ENCODE measurements at regions of chr9 and their contacts with region 1.

Region 1: DNA sequence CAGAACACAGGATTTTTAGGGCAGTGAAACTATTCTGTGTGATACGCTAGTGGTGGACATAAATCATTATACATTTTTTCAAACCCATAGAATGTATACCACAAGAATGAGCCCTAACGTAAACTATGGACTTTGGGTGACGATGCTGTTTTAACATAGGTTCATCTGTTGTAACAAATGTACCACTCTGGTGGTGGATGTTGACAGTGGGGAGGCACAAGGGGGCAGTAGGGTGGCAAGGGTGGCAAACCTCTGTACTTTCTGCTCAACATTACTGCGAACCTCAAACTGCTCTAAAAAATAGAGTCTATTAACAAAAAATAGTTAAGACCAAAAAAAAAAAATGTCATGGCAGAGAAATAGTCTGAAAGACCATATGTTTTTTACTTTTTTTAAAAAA is 9.1 kb upstream of the MVB12B start:
- DNase-seq: no peak
- H3K4me3 ChIP-seq: no peak overlapping the region
- H3K27ac ChIP-seq: no peak overlapping the region
- H3K4me1 ChIP-seq: no peaks in the 10 kb centered on the region
- H3K27me3 ChIP-seq: no peaks in the 10 kb centered on the region
- CTCF ChIP-seq: peak; percentile 17 to 46

Region 2: GRCh38 chr9:126386088-126386487 is 68.6 kb after region 1 on chr9:
- CTCF ChIA-PET with region 1: no interaction called
- dilution Hi-C with region 1: no loop called
- in situ Hi-C with region 1: no loop called
- intact Hi-C with region 1: loop called (anchors 2 kb)
- DNase-seq: no peak
- H3K4me3 ChIP-seq: no peak overlapping the region
- H3K27ac ChIP-seq: no peak overlapping the region
- H3K4me1 ChIP-seq: no peaks in the 10 kb centered on the region
- H3K27me3 ChIP-seq: no peaks in the 10 kb centered on the region
- CTCF ChIP-seq: peak; percentile 42 to 58

Region 3: DNA sequence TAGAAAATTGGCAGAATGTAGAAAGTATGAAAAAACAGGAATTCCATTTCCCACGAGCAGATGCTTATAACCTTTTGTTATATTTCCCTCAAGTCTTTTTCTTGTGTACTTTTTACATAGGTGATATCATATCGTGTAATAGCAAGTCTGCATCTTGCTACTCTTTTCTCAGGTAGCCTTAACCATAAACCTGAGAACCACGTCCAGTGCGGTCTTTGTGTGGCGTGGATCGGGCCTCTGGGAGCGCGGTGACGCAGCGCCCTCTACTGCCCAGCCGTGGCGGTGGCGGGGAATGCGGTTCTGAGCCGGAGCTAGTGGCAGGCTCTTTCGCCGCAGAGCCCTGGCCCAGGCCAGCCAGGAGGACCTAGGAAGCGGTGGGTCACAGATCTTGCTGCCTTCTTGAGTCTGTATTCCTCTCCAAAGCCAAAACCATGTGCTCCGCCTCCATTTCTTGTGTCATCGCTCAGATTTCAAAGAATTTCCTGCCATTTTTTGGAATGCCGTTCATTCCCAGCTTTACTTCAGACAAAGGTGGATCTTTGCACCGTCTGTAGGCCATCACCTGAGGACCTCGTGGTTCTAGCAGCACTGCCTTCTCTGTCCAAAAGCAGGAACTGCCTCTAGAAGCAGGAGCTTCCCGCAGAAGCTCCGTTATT is 81.0 kb after region 1 on chr9:
- CTCF ChIA-PET with region 1: no interaction called
- dilution Hi-C with region 1: loop called (anchors 5 kb)
- in situ Hi-C with region 1: no loop called
- intact Hi-C with region 1: no loop called
- DNase-seq: peak; percentile 46
- H3K4me3 ChIP-seq: no peak overlapping the region
- H3K27ac ChIP-seq: no peak overlapping the region
- H3K4me1 ChIP-seq: peaks cover 13% of the 10 kb centered on the region
- H3K27me3 ChIP-seq: no peaks in the 10 kb centered on the region
- CTCF ChIP-seq: peak; percentile 93 to 100

Region 4: GRCh38 chr9:126411225-126411947 is 93.9 kb after region 1 on chr9:
- CTCF ChIA-PET with region 1: interaction called, 10 read pairs
- dilution Hi-C with region 1: no loop called
- in situ Hi-C with region 1: no loop called
- intact Hi-C with region 1: no loop called
- DNase-seq: peak; percentile 79
- H3K4me3 ChIP-seq: peak overlapping the region in 2 of 3 experiments; percentile 8 to 28
- H3K27ac ChIP-seq: peak overlapping the region; percentile 34
- H3K4me1 ChIP-seq: peaks cover 11% of the 10 kb centered on the region
- H3K27me3 ChIP-seq: no peaks in the 10 kb centered on the region
- CTCF ChIP-seq: no peak

Region 5: GRCh38 chr9:126927419-126927818 is 609.9 kb after region 1 on chr9:
- CTCF ChIA-PET with region 1: no interaction called
- dilution Hi-C with region 1: no loop called
- in situ Hi-C with region 1: no loop called
- intact Hi-C with region 1: no loop called
- DNase-seq: no peak
- H3K4me3 ChIP-seq: no peak overlapping the region
- H3K27ac ChIP-seq: no peak overlapping the region
- H3K4me1 ChIP-seq: no peaks in the 10 kb centered on the region
- H3K27me3 ChIP-seq: peaks cover 9% of the 10 kb centered on the region
- CTCF ChIP-seq: no peak